A673 (cell line): ENCODE measurements at regions of chr21 and their contacts with region 1.

Region 1: DNA sequence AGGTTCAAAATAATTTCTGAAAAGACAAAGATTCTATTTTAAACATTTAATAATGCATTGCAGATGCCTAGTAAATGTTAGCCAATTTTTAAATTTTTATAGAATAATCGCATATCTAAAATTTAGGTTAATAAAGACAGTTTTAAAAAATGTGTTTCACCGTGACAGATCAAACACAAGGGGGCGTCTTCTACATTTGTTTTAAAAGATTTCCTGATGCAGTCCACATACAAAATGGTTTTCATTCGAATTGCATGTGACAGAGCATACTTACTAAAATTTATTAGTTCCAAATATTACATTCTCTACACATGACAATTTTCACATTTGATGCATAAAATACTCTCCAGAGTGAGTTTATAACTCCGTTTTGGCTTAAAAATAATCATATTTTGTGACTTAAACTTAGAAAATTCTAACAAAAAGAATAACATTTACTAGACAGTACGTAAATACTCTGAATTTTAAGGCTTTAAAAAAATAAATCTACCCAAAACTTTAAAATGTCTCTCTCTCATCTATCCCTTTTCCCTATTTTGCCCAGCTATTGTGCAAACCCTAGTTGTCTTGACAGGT is 75.5 kb downstream of the ADAMTS1 start:
- DNase-seq: peak; percentile 57
- H3K4me3 ChIP-seq: no peak overlapping the region
- H3K27ac ChIP-seq: no peak overlapping the region
- H3K4me1 ChIP-seq: no peaks in the 10 kb centered on the region
- H3K27me3 ChIP-seq: no peaks in the 10 kb centered on the region
- CTCF ChIP-seq: peak; percentile 76

Region 2: DNA sequence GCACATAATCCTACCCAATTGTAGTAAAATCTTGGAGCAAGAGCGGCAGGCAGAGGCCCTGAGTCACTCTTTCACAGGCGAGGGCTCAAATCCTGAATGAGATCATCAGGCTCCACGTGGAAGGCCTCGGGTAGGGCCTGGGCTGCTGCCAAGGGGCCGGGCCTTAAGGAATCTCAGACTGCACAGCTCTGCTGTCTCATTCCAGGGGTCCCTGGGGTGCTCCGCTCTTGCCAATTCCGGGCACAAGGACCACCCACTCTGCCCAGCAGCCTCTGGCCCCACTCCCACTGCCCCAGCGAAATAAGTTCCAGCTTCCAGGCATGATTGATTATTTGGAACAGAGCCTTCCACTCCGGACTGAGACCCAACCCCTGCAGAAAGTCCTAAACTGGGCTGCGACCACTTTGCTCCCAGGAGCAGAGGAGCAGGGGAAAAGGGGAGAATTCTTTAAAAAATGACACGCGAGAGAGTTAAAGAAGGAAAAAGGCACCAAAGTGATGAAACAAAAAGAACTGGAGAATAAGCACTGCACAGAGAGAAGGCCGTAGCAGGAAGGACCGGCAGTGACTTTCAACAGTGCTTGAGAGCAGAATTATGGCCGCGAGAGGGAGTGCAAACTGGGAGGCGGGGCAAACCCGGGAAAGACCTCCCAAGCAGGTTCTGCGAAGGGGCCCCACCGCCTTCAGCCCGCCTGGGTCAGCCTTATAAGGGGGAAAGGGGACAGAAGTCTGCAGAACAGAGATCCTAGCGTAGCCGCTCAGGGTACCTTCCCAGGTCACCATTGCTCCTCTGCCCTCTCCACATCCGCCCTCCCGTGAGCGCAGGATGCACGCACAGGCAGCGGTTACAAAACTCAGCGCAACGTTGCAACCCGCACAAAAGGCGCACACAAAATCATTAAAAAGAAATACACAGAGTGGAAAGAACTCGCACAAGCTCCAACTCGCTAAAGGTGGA is 73.6 kb after region 1 on chr21:
- CTCF ChIA-PET with region 1: no interaction called
- POLR2A ChIA-PET with region 1: no interaction called
- intact Hi-C with region 1: loop called (anchors 2 kb)
- DNase-seq: peak; percentile 97
- H3K4me3 ChIP-seq: peak overlapping the region; percentile 69
- H3K27ac ChIP-seq: peak overlapping the region; percentile 90
- H3K4me1 ChIP-seq: peaks cover 18% of the 10 kb centered on the region
- H3K27me3 ChIP-seq: no peaks in the 10 kb centered on the region
- CTCF ChIP-seq: peak; percentile 56

Region 3: DNA sequence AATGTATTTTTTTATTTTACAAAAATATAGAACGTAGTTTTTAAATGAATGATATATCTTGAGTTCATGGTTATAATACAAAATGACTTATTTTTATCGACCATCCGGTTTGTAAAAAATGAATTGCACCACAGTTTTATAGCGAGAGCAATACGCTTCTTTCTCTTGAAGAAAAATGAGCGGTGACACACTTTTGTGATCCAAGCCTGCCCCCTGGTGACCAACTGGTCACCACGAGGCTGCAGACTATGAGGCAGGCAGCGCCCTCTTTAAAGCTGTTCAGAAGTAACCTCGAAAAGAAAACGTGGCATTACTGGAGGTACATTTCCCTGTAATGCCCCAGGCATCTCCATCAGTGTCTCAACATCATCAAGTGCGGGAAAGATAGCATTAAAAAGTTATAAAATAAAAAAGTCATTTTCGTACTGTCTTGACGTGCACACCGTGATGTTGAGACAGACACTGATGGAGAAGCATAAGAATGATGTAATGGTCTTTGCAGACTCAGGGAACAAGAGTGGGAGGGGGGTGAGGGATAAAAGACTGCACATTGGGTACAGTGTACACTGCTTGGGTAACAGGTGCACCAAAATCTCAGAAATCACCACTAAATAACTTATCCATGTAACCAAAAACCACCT is 931.4 kb after region 1 on chr21:
- CTCF ChIA-PET with region 1: no interaction called
- POLR2A ChIA-PET with region 1: no interaction called
- intact Hi-C with region 1: loop called (anchors 2 kb)
- DNase-seq: peak; percentile 84
- H3K4me3 ChIP-seq: no peak overlapping the region
- H3K27ac ChIP-seq: no peak overlapping the region
- H3K4me1 ChIP-seq: no peaks in the 10 kb centered on the region
- H3K27me3 ChIP-seq: no peaks in the 10 kb centered on the region
- CTCF ChIP-seq: peak; percentile 86

Region 4: GRCh38 chr21:28336314-28336713 is 1566.6 kb after region 1 on chr21:
- CTCF ChIA-PET with region 1: no interaction called
- POLR2A ChIA-PET with region 1: no interaction called
- intact Hi-C with region 1: loop called (anchors 10 kb)
- DNase-seq: peak; percentile 47
- H3K4me3 ChIP-seq: no peak overlapping the region
- H3K27ac ChIP-seq: no peak overlapping the region
- H3K4me1 ChIP-seq: peaks cover 3% of the 10 kb centered on the region
- H3K27me3 ChIP-seq: no peaks in the 10 kb centered on the region
- CTCF ChIP-seq: peak; percentile 57